WTC11 (cell line): ENCODE measurements at regions of chr17 and their contacts with region 1.

Region 1: GRCh38 chr17:76597728-76598474 is 12.2 kb upstream of the ST6GALNAC2 start:
- DNase-seq: no peak
- ATAC-seq: no peak
- H3K4me3 Mint-ChIP-seq: no peak overlapping the region
- H3K27ac Mint-ChIP-seq: no peak overlapping the region
- H3K4me1 Mint-ChIP-seq: peaks cover 15% of the 10 kb centered on the region
- H3K27me3 Mint-ChIP-seq: no peaks in the 10 kb centered on the region; the same call in 1 of the 2 replicates
- CTCF ChIP-seq: no peak

Region 2: DNA sequence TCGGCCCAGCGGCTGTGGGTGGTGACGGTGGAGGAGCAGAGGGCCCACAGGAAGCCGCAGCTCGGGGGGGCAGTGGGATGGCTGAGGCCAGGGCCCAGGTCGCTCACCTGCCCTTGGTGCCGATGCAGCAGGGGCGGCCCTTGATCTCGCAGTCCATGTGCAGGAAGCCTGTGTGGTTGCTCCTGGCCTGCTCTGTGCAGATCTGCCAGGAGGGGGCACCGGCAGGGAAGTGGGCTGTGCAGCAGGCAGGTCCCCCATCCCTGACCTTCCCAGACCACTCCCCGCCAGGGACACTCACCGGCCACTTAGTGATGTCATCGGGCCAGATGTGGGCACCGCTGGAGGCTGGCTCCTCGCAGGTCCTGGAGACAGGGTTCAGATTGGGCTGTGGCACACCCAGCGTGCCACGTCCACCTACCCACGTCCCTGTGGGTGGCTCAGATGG is 124.3 kb before region 1 on chr17:
- CTCF ChIA-PET with region 1: no interaction called
- POLR2A ChIA-PET with region 1: no interaction called
- DNase-seq: peak; percentile 82
- ATAC-seq: peak; percentile 88
- H3K4me3 Mint-ChIP-seq: no peak overlapping the region
- H3K27ac Mint-ChIP-seq: no peak overlapping the region; the same call in 1 of the 2 replicates
- H3K4me1 Mint-ChIP-seq: no peaks in the 10 kb centered on the region
- H3K27me3 Mint-ChIP-seq: no peaks in the 10 kb centered on the region
- CTCF ChIP-seq: no peak

Region 3: GRCh38 chr17:76585818-76586593 is 11.9 kb before region 1 on chr17 and contains the start of gene ST6GALNAC2:
- CTCF ChIA-PET with region 1: interaction called, 10 read pairs
- POLR2A ChIA-PET with region 1: interaction called, 8 read pairs
- DNase-seq: peak; percentile 37
- ATAC-seq: peak; percentile 33
- H3K4me3 Mint-ChIP-seq: peak within 1 kb of the TSS; percentile 71
- H3K27ac Mint-ChIP-seq: no peak within 1 kb of the TSS
- H3K4me1 Mint-ChIP-seq: peaks cover 18% of the 10 kb centered on the region
- H3K27me3 Mint-ChIP-seq: peaks cover 84% of the 10 kb centered on the region
- CTCF ChIP-seq: no peak
- total RNA-seq, gene ST6GALNAC2: 0.30 TPM in 1 of 3 replicates, not detected in the others

Region 4: GRCh38 chr17:76631829-76632565 is 34.1 kb after region 1 on chr17:
- CTCF ChIA-PET with region 1: no interaction called
- POLR2A ChIA-PET with region 1: no interaction called
- DNase-seq: no peak
- ATAC-seq: no peak
- H3K4me3 Mint-ChIP-seq: no peak overlapping the region
- H3K27ac Mint-ChIP-seq: no peak overlapping the region
- H3K4me1 Mint-ChIP-seq: peaks cover 28% of the 10 kb centered on the region
- H3K27me3 Mint-ChIP-seq: no peaks in the 10 kb centered on the region
- CTCF ChIP-seq: no peak

Region 5: DNA sequence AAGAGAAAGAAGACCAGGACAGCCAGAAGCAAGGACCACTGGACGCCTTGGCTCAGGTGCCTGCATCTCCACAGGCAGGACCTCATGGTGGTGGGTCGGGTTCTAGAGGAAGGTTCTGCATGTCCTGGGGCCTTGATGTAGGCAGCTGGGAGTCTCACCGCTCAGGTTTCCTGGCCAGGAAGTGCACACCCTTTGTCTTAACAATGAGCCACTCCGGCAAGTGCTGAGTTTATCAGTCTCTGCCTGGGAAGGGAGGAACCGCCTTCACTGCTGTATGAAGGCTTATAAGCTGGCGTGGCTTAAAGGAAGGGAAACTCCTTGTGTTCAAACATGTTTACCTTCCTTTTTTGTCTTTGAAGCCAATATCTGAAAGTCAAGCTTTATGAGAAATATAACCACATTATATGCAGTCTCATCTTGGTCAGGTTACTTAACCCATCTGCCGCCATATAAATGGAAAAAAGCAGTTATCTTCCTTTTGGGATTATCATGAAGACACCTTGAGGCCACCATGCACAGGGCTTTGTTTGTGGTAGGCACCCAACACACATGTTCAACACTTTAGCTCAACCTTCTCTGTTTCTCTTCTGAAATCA is 45.8 kb after region 1 on chr17 and contains the start of gene ST6GALNAC1:
- CTCF ChIA-PET with region 1: no interaction called
- POLR2A ChIA-PET with region 1: no interaction called
- DNase-seq: no peak
- ATAC-seq: no peak
- H3K4me3 Mint-ChIP-seq: no peak within 1 kb of the TSS
- H3K27ac Mint-ChIP-seq: no peak within 1 kb of the TSS
- H3K4me1 Mint-ChIP-seq: peaks cover 14% of the 10 kb centered on the region
- H3K27me3 Mint-ChIP-seq: no peaks in the 10 kb centered on the region; the same call in 1 of the 2 replicates
- CTCF ChIP-seq: no peak
- total RNA-seq, gene ST6GALNAC1: 0.13 to 0.37 TPM (median 0.16 TPM) in 3 replicates

Region 6: DNA sequence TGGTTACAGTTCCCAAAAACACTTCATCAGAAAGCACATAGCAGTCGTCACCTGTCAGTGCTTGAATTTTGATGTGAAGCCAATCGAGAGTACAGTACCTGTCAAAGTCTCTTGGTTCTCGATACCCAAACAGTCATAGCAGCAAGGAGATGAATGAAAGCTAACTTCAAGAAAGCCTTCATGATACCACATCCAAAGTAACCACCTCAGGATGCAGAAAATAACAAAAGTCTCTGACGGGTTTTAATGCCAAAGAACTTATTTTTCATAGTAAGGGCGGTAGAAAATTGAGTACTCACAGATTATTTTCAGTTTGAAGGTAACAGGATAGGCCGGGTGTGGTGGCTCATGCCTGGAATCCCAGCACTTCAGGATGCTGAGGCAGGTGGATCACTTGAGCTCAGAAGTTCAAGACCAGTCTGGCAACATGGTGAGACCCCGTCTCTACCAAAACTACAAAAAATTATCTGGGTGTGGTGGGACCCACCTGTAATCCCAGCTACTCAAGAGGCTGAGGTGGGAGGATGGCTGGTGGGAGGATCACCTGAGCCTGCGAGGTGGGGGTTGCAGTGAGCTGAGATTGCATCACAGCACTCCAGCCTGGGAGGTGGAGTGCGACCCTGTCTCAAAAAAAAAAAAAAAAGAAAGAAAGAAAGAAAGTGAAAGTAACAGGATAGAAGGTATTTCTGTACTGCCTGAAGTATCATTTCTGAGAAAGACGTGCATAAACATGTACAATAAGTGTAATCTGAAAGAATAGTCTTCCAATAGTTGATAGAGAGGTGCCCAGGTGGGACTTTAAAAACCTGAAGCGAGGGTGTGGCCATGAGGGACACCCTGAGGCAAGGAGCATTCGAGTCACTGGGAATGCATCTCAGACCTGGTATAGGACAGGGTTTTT is 155.4 kb after region 1 on chr17:
- CTCF ChIA-PET with region 1: no interaction called
- POLR2A ChIA-PET with region 1: no interaction called
- DNase-seq: no peak
- ATAC-seq: no peak
- H3K4me3 Mint-ChIP-seq: no peak overlapping the region
- H3K27ac Mint-ChIP-seq: no peak overlapping the region
- H3K4me1 Mint-ChIP-seq: no peaks in the 10 kb centered on the region
- H3K27me3 Mint-ChIP-seq: no peaks in the 10 kb centered on the region
- CTCF ChIP-seq: no peak